ENCODE measurements at regions of chr2 and their contacts with region 1.

Region 1: GRCh38 chr2:101704046-101704466 is 6.5 kb downstream of the MAP4K4 start:
- DNase-seq: no peak
- ATAC-seq: peak; percentile 11
- H3K4me3 Mint-ChIP-seq: peak overlapping the region; percentile 75
- H3K27ac Mint-ChIP-seq: peak overlapping the region; percentile 88
- H3K4me1 Mint-ChIP-seq: no peaks in the 10 kb centered on the region
- H3K27me3 Mint-ChIP-seq: no peaks in the 10 kb centered on the region
- CTCF ChIP-seq: no peak

Region 2: GRCh38 chr2:100865816-100866460 is 838.1 kb before region 1 on chr2:
- CTCF ChIA-PET with region 1: no interaction called
- POLR2A ChIA-PET with region 1: no interaction called
- intact Hi-C with region 1: no loop called
- DNase-seq: no peak
- ATAC-seq: no peak
- H3K4me3 Mint-ChIP-seq: no peak overlapping the region
- H3K27ac Mint-ChIP-seq: no peak overlapping the region
- H3K4me1 Mint-ChIP-seq: no peaks in the 10 kb centered on the region
- H3K27me3 Mint-ChIP-seq: peaks cover 13% of the 10 kb centered on the region
- CTCF ChIP-seq: no peak

Region 3: DNA sequence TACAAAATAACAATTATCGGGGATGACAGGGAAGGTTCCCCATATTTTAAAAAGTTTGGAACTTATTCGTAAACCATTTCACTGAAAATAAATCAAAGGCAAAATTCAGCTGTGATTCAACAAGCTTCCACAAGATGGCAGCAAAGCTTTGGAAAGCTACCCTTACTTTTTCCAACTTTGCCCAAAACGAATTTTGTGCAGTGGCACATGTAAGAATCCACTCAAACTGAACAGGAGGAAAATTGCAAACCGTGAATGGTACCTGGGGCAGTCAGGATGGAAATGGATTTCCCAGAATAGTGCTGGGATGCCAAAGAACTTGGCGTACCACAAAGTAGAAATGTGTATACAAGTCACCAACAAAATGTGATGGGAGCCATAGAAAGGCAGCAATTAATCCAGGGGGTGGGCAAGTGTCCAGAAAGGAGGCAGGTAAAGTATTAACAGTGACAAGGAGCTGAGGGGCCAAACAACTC is 691.3 kb before region 1 on chr2:
- CTCF ChIA-PET with region 1: no interaction called
- POLR2A ChIA-PET with region 1: no interaction called
- intact Hi-C with region 1: no loop called
- DNase-seq: no peak
- ATAC-seq: no peak
- H3K4me3 Mint-ChIP-seq: no peak overlapping the region
- H3K27ac Mint-ChIP-seq: no peak overlapping the region
- H3K4me1 Mint-ChIP-seq: peaks cover 20% of the 10 kb centered on the region
- H3K27me3 Mint-ChIP-seq: no peaks in the 10 kb centered on the region
- CTCF ChIP-seq: peak; percentile 93

Region 4: DNA sequence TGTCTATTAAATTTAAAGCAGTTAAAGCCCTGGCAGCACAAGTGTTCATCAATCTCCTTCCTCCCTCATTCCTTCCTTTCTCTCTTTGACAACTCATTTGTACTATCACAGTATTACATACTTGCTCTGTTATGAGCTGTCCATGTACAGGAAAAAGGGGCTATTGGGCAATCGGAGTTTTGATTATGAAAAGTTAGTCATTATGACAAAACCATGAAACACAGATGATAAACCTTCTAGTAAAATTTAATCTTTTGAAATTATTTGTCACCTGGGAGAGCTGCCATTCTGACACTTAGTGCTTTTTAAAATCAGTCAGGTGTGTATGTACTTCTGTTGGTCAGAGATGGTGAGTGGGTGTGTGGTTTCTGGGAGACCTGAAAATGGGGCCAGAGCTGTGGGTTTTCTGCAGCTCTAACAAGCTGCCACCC is 32.8 kb after region 1 on chr2:
- CTCF ChIA-PET with region 1: no interaction called
- POLR2A ChIA-PET with region 1: no interaction called
- intact Hi-C with region 1: no loop called
- DNase-seq: no peak
- ATAC-seq: no peak
- H3K4me3 Mint-ChIP-seq: peak overlapping the region; percentile 28
- H3K27ac Mint-ChIP-seq: peak overlapping the region; percentile 32
- H3K4me1 Mint-ChIP-seq: peaks cover 92% of the 10 kb centered on the region
- H3K27me3 Mint-ChIP-seq: no peaks in the 10 kb centered on the region
- CTCF ChIP-seq: no peak

Region 5: GRCh38 chr2:101912545-101912944 is 208.5 kb after region 1 on chr2:
- CTCF ChIA-PET with region 1: no interaction called
- POLR2A ChIA-PET with region 1: no interaction called
- intact Hi-C with region 1: loop called (anchors 10 kb)
- DNase-seq: no peak
- ATAC-seq: peak; percentile 95
- H3K4me3 Mint-ChIP-seq: peak overlapping the region; percentile 52
- H3K27ac Mint-ChIP-seq: peak overlapping the region; percentile 69
- H3K4me1 Mint-ChIP-seq: peaks cover 49% of the 10 kb centered on the region
- H3K27me3 Mint-ChIP-seq: no peaks in the 10 kb centered on the region
- CTCF ChIP-seq: no peak